HepG2 (cell line): ENCODE measurements at regions of chr10 and their contacts with region 1.

Region 1: GRCh38 chr10:84460520-84460919 is 132.1 kb downstream of the CCSER2 start:
- DNase-seq: no peak
- ATAC-seq: no peak
- H3K4me3 ChIP-seq: no peak overlapping the region
- H3K27ac ChIP-seq: no peak overlapping the region
- H3K4me1 ChIP-seq: peaks cover 19% of the 10 kb centered on the region
- H3K27me3 ChIP-seq: no peaks in the 10 kb centered on the region
- CTCF ChIP-seq: no peak
- EP300 ChIP-seq: no peak
- POLR2A ChIP-seq: no peak
- RAD21 ChIP-seq: no peak

Region 2: GRCh38 chr10:84429926-84430520 is 30.5 kb before region 1 on chr10:
- CTCF ChIA-PET with region 1: no interaction called
- POLR2A ChIA-PET with region 1: no interaction called
- in situ Hi-C with region 1: no loop called
- intact Hi-C with region 1: no loop called
- DNase-seq: peak; percentile 69
- ATAC-seq: peak; percentile 95
- H3K4me3 ChIP-seq: no peak overlapping the region
- H3K27ac ChIP-seq: no peak overlapping the region
- H3K4me1 ChIP-seq: peaks cover 12% of the 10 kb centered on the region
- H3K27me3 ChIP-seq: no peaks in the 10 kb centered on the region
- CTCF ChIP-seq: peak; percentile 83
- EP300 ChIP-seq: no peak
- POLR2A ChIP-seq: no peak
- RAD21 ChIP-seq: peak; percentile 60; the same call in 1 of the 2 replicates

Region 3: GRCh38 chr10:84523526-84523925 is 63.0 kb after region 1 on chr10:
- CTCF ChIA-PET with region 1: no interaction called
- POLR2A ChIA-PET with region 1: no interaction called
- in situ Hi-C with region 1: loop called (anchors 5 kb)
- intact Hi-C with region 1: no loop called
- DNase-seq: peak; percentile 94
- ATAC-seq: peak; percentile 94
- H3K4me3 ChIP-seq: peak overlapping the region in 1 of 3 experiments; percentile 10; a peak in 1 of 6 replicates
- H3K27ac ChIP-seq: peak overlapping the region; percentile 65
- H3K4me1 ChIP-seq: peaks cover 57% of the 10 kb centered on the region
- H3K27me3 ChIP-seq: no peaks in the 10 kb centered on the region
- CTCF ChIP-seq: no peak
- EP300 ChIP-seq: peak in 1 of 2 experiments; percentile 84; a peak in 2 of 4 replicates
- POLR2A ChIP-seq: no peak
- RAD21 ChIP-seq: no peak